ENCODE measurements at regions of chr19 and their contacts with region 1.

Region 1: DNA sequence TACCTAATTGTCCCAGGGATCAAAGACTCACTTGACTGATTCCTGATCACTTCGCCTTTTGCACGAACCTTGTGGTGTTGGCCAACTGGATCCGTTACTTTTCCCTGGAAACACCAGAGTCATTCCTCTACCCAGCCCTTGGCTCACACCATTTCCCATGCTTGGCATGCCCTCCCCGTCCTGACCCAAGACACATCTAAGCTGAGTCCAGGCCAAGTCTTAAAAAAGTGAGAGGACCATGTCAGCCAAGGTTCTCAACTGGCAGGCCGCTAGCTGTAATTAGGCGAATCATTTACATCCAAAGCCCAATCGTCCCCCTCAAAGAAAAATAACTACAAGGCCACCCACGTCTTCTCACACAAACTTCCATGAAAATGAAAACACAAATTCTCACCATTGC is 11.5 kb downstream of the PLAUR start:
- DNase-seq: no peak
- H3K4me3 ChIP-seq: no peak overlapping the region
- H3K4me3 Mint-ChIP-seq: no peak overlapping the region
- H3K27ac ChIP-seq: no peak overlapping the region
- H3K27ac Mint-ChIP-seq: peak overlapping the region in 1 of 8 donors; percentile 6
- H3K4me1 ChIP-seq: peaks cover under 1% of the 10 kb centered on the region
- H3K4me1 Mint-ChIP-seq: peaks cover 0 to 6% (median 0%) of the 10 kb centered on the region in 3 donors
- H3K27me3 ChIP-seq: no peaks in the 10 kb centered on the region
- H3K27me3 Mint-ChIP-seq: peaks cover 0 to 2% of the 10 kb centered on the region in 2 donors

Region 2: DNA sequence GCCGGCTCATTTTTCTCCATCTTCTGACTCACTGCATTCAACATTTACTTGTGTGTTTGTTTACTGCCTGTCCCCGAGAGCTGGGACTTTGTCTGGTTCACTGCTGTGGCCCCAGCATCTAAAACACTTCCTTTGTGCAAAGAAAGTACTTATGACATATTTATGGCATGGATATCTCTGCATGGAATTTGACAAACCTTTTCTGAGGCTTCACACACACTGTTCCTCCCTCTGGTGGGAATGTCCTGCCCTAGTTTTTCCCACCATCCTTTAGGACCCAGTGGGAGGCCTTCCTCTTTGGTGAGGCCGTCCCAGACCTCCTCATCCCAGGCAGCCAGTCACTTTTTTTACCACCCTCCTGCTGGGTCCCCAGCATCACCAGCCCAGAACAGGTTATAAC is 48.0 kb before region 1 on chr19:
- CTCF ChIA-PET with region 1: no interaction called
- POLR2A ChIA-PET with region 1: no interaction called
- DNase-seq: no peak
- H3K4me3 ChIP-seq: no peak overlapping the region
- H3K4me3 Mint-ChIP-seq: no peak overlapping the region
- H3K27ac ChIP-seq: no peak overlapping the region
- H3K27ac Mint-ChIP-seq: peak overlapping the region in 4 of 8 donors; percentile 33 to 74 (median 60)
- H3K4me1 ChIP-seq: no peaks in the 10 kb centered on the region
- H3K4me1 Mint-ChIP-seq: peaks cover 26 to 36% (median 26%) of the 10 kb centered on the region in 3 donors
- H3K27me3 ChIP-seq: no peaks in the 10 kb centered on the region
- H3K27me3 Mint-ChIP-seq: no peaks in the 10 kb centered on the region

Region 3: GRCh38 chr19:43668406-43669158 is 10.1 kb after region 1 on chr19:
- CTCF ChIA-PET with region 1: interaction called, 10 read pairs
- POLR2A ChIA-PET with region 1: no interaction called
- DNase-seq: peak; percentile 91 to 96 (median 92)
- H3K4me3 ChIP-seq: peak overlapping the region; percentile 63
- H3K4me3 Mint-ChIP-seq: peak overlapping the region; percentile 88 to 92 (median 89)
- H3K27ac ChIP-seq: peak overlapping the region; percentile 60
- H3K27ac Mint-ChIP-seq: peak overlapping the region; percentile 47 to 92 (median 86)
- H3K4me1 ChIP-seq: peaks cover 29% of the 10 kb centered on the region
- H3K4me1 Mint-ChIP-seq: peaks cover 40 to 56% (median 54%) of the 10 kb centered on the region in 3 donors
- H3K27me3 ChIP-seq: no peaks in the 10 kb centered on the region
- H3K27me3 Mint-ChIP-seq: peaks cover 0 to 9% of the 10 kb centered on the region in 2 donors

Region 4: DNA sequence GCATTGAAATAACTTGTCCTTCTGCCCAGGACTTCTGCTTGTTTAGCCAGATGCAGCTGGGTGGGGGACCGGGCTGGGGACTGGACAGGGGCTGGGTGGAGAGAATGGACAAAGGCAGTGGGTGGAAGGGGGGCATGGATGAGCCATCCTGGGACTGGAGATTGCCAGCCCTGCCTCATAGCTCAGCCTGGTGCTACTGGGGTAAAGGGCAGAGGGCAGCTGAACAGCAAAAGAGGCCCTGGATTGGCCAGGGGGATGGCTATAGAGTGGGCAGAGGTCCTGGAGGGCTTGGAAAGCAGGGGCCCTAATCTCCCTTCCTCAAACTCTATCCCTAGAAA is 29.1 kb after region 1 on chr19:
- CTCF ChIA-PET with region 1: no interaction called
- POLR2A ChIA-PET with region 1: no interaction called
- DNase-seq: no peak
- H3K4me3 ChIP-seq: no peak overlapping the region
- H3K4me3 Mint-ChIP-seq: no peak overlapping the region
- H3K27ac ChIP-seq: no peak overlapping the region
- H3K27ac Mint-ChIP-seq: no peak overlapping the region
- H3K4me1 ChIP-seq: no peaks in the 10 kb centered on the region
- H3K4me1 Mint-ChIP-seq: no peaks in the 10 kb centered on the region
- H3K27me3 ChIP-seq: no peaks in the 10 kb centered on the region
- H3K27me3 Mint-ChIP-seq: peaks cover 2 to 12% of the 10 kb centered on the region in 2 donors